ENCODE measurements at regions of chr12 and their contacts with region 1.

Region 1: DNA sequence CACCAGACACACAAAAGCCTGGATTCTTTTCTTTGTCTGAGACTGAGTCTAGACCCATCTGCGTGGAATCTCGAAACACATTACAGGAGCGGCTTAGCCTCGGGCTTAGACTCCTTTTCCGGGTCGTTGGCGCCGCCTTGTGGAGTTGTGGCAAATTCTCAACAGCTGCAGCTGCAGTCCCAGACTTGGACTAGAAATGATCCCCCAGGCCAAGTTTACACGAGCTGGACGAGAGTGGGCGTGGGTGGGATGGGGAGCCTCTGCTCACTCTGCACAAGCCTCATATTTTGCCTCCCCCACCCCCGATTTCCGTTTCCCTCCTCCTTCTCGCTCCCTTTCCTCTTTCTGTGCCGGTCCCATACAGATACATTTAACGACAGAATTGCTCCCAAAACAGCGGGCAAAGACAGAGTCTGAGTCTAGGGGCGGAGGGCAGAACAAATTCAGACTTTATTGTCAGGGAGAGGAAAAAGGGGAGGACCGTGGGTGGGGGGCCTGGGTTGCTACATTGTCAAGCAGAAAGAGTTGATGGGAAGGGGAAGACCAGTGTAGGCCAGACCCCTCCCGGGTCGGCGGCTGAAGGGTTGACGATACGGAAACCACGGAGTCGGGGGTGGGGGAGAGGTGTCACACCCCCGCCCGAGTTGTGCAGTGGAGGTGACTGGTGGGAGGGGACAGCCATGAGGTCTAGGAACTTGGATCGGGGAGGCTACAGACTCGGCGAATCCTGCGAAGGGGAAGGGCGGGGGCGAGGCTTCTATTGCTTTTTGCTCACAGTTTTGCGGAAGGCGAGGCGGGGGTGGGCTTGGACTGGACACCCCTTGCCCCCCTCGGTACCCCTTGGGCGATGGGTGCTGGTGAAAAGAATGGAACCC is 4.7 kb upstream of the GPR84 start:
- DNase-seq: peak; percentile 93
- H3K4me3 Mint-ChIP-seq: no peak overlapping the region
- H3K27ac Mint-ChIP-seq: no peak overlapping the region
- H3K4me1 Mint-ChIP-seq: peaks cover 40% of the 10 kb centered on the region
- H3K27me3 Mint-ChIP-seq: peaks cover 3% of the 10 kb centered on the region

Region 2: DNA sequence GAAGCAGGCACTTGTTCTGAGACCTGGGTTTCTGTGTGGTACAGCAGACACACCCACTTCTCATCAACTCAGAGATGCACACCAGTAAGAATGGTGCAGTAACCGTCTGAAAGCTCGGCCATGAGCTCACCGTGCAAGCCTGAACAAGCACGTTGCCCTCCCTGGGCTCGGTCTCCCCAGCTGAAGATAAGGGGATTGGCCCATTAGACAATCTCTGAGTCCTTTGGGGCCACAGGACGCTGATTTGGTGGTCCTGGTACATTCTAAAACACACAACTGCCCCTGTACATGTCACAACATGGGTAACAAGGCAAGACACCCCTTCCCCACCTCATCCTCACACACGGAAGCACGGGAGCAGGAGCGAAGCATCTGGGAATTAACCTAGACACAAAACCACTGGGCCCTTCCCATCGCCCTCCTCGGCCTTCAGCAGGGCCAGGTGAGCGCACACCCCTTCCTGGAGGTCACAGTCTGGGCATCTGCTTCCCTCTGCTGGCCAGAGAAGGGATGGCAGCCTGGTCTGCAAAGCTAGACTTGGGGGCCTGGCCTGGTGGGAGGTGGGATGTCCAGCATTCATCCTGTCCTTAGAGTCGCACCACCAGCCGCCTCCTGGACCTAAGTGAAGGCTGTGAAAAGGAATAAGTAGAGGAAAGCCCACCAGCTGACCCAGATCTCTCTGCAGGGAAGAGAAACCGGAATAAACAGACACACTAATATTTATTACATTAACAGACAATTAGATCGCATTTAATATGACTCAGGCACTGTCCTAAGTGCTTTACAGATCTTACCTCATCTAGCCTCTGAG is 161.3 kb before region 1 on chr12:
- CTCF ChIA-PET with region 1: interaction called, 36 read pairs
- POLR2A ChIA-PET with region 1: no interaction called
- intact Hi-C with region 1: no loop called
- DNase-seq: peak; percentile 86
- H3K4me3 Mint-ChIP-seq: no peak overlapping the region
- H3K27ac Mint-ChIP-seq: no peak overlapping the region
- H3K4me1 Mint-ChIP-seq: no peaks in the 10 kb centered on the region
- H3K27me3 Mint-ChIP-seq: peaks cover 19% of the 10 kb centered on the region

Region 3: DNA sequence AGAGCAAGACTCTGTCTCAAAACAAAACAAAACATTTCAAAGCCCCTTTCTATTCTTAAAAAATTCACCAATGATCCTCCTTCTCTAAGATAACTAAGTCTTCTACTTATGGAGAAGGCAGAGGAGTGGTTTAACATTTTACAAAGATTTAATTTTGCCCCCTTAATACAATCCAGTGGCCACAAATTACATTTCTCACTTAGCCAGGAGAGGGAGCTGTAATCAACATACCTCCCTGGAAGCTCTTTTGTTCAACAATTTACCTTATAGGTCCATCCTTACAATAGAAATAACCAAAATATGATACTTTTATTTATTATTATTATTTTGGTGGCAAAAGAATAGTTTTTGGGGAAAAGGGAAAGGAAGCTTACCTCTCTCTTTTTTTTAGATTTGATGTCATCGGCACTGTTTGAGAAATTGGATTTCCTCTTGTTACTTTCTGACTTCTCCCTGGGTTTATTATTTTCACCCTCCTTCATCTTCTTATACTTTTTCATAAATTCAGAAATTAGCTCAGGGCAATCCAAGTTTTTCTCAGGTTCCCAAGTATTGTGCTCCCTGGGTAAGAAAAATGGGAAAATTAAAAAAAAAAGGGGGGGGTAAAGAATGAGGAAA is 117.2 kb before region 1 on chr12:
- CTCF ChIA-PET with region 1: interaction called, 16 read pairs
- POLR2A ChIA-PET with region 1: no interaction called
- intact Hi-C with region 1: no loop called
- DNase-seq: no peak
- H3K4me3 Mint-ChIP-seq: no peak overlapping the region
- H3K27ac Mint-ChIP-seq: no peak overlapping the region
- H3K4me1 Mint-ChIP-seq: peaks cover 9% of the 10 kb centered on the region
- H3K27me3 Mint-ChIP-seq: no peaks in the 10 kb centered on the region

Region 4: GRCh38 chr12:54300732-54301427 is 68.1 kb before region 1 on chr12 and contains the start of gene NFE2:
- CTCF ChIA-PET with region 1: interaction called, 96 read pairs
- POLR2A ChIA-PET with region 1: no interaction called
- intact Hi-C with region 1: no loop called
- DNase-seq: peak; percentile 56
- H3K4me3 Mint-ChIP-seq: peak within 1 kb of the TSS; percentile 21
- H3K27ac Mint-ChIP-seq: no peak within 1 kb of the TSS
- H3K4me1 Mint-ChIP-seq: peaks cover 9% of the 10 kb centered on the region
- H3K27me3 Mint-ChIP-seq: peaks cover 47% of the 10 kb centered on the region
- total RNA-seq, gene NFE2: not detected

Region 5: GRCh38 chr12:54352022-54352531 is 16.9 kb before region 1 on chr12:
- CTCF ChIA-PET with region 1: interaction called, 13 read pairs
- POLR2A ChIA-PET with region 1: no interaction called
- intact Hi-C with region 1: no loop called
- DNase-seq: peak; percentile 68
- H3K4me3 Mint-ChIP-seq: peak overlapping the region; percentile 59
- H3K27ac Mint-ChIP-seq: peak overlapping the region; percentile 46
- H3K4me1 Mint-ChIP-seq: peaks cover 15% of the 10 kb centered on the region
- H3K27me3 Mint-ChIP-seq: no peaks in the 10 kb centered on the region